Testis (tissue), 5 donors: ENCODE measurements at regions of chr2 and their contacts with region 1.

Region 1: DNA sequence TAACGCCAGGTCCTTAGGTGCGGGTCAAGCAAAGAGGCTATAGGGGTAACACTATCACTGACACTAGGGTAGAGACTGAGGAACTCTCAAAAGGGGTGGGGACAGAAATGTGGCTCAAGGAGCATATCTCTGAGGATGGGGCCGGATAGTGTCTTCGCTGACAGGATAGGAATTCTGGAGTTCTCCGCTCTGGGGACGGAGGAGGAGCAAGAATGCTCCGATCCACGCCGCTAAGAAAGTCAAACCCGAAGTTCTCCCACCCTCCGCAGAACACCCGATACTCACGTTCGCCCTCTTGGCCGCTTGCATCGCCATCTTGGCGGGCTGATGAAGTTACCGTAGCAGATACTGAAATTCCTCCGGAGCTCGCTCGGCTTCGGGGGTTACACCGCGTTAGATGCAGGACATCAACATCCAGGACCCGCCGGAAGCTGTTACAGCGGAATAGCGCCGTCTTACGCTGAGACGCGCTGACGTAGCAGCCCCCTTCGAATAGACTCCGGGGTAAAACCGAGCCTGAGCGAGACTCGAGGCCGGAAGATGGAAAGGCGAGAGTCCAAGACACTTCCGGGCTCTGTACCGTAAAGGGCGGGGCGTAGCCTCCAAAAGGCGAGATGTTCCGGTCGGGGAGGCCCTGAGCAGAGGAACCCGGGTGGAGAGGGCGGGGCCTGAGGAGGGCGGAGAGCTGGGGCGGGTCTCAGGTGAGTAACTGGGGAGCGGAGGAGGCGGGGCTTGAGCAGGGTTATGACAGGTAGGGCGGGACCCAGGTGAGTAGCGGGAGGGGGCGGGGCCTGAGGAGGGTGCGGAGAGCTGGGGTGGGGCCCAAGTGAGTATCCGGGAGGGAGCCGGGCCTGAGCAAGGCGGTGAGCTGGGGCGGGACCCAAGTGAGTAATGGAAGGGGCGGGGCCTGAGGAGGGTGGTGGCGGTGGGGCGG is at the start of gene SF3B6:
- DNase-seq: peak; percentile 99
- H3K4me3 ChIP-seq: peak within 1 kb of the TSS; percentile 77 to 78
- H3K27ac ChIP-seq: peak within 1 kb of the TSS; percentile 92 to 94
- H3K4me1 ChIP-seq: peaks cover 11% of the 10 kb centered on the region
- H3K27me3 ChIP-seq: no peaks in the 10 kb centered on the region
- CTCF ChIP-seq: peak in 2 of 3 experiments; percentile 20 to 27
- POLR2A ChIP-seq: no peak
- total RNA-seq, gene SF3B6: 69.3 to 87.4 TPM

Region 2: GRCh38 chr2:23813438-23813837 is 262.7 kb before region 1 on chr2:
- intact Hi-C with region 1: no loop called
- DNase-seq: no peak
- H3K4me3 ChIP-seq: no peak overlapping the region
- H3K27ac ChIP-seq: no peak overlapping the region
- H3K4me1 ChIP-seq: no peaks in the 10 kb centered on the region
- H3K27me3 ChIP-seq: no peaks in the 10 kb centered on the region
- CTCF ChIP-seq: no peak
- POLR2A ChIP-seq: no peak

Region 3: GRCh38 chr2:23926750-23927571 is 149.2 kb before region 1 on chr2 and contains the start of gene ATAD2B:
- intact Hi-C with region 1: loop called (anchors 5 kb)
- DNase-seq: peak; percentile 91
- H3K4me3 ChIP-seq: peak within 1 kb of the TSS; percentile 78 to 99
- H3K27ac ChIP-seq: peak within 1 kb of the TSS; percentile 96 to 99
- H3K4me1 ChIP-seq: peaks cover 13% of the 10 kb centered on the region
- H3K27me3 ChIP-seq: no peaks in the 10 kb centered on the region
- CTCF ChIP-seq: peak; percentile 80 to 93 (median 81)
- POLR2A ChIP-seq: peak; percentile 10
- total RNA-seq, gene ATAD2B: 23.2 to 32.3 TPM

Region 4: GRCh38 chr2:23967846-23968245 is 108.3 kb before region 1 on chr2:
- intact Hi-C with region 1: no loop called
- DNase-seq: no peak
- H3K4me3 ChIP-seq: no peak overlapping the region
- H3K27ac ChIP-seq: no peak overlapping the region
- H3K4me1 ChIP-seq: no peaks in the 10 kb centered on the region
- H3K27me3 ChIP-seq: no peaks in the 10 kb centered on the region
- CTCF ChIP-seq: no peak
- POLR2A ChIP-seq: no peak

Region 5: DNA sequence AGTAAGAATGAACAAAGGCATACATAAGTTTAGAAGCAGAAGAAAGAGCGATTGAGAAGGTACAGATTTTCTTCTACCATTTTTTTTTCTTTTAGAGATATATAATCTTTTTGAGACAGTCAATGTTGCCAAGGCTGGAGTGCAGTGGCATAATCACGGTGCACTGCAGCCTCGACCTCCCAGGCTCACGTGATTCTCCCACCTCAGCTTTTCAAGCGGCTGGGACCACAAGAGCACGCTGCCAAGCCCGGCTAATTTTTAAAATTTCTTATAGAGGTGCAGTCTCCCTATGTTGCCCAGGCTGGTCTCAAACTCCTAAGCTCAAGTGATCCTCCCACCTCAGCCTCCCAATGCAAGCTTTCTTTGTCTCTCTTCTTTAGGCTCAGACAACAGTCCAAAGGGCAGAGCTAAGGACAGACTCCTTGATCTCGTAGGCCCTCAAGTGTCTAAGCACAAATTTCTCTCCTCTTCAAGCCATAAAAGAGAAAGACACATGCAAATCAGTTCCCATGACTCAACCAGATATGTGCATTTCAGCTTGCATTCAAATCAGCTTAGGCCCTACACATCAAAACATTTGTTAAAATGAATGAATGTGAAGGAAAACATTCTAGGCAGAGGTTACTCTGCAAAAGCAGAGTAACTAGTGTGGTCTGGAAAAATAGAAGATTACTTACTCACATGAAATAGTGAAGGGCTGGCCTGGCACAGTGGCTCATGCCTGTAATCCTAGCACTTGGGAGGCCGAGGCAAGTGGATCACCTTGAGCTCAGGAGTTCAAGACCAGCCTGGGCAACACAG is 266.1 kb after region 1 on chr2:
- intact Hi-C with region 1: no loop called
- DNase-seq: no peak
- H3K4me3 ChIP-seq: no peak overlapping the region
- H3K27ac ChIP-seq: no peak overlapping the region
- H3K4me1 ChIP-seq: peaks cover 9% of the 10 kb centered on the region
- H3K27me3 ChIP-seq: no peaks in the 10 kb centered on the region
- CTCF ChIP-seq: no peak
- POLR2A ChIP-seq: no peak